PC-9 (cell line): ENCODE measurements at regions of chr1 and their contacts with region 1.

Region 1: DNA sequence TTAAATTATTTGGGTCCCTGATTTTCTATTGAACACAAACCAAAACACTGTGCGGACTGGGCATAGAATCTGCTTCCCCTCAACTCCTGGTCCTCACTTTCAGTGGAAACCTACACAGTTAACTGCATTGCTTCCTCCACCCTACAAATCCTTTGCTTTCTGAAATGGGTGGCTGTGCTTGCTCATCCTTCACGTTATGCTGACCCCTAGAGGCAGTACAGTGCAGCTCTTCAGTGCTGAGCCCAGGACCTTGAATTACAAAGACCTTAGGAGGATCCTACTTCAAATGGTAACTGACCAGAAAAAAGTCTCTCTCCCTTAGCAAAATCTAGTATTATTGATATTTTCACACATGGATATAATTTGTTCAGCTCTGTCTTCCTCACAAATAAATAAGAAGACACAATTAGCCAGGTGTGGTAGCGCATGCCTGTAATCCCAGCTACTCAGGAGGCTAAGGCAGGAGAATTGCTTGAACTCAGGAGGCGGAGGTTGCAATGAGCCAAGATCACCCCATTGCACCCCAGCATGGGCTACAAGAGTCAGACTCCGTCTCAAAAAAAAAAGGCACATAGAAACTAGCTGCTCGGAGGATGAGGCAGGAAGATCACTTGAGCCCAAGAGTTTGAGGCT is 63.4 kb upstream of the L1TD1 start:
- DNase-seq: peak in 1 of 2 experiments; percentile 41
- H3K4me3 ChIP-seq: no peak overlapping the region
- H3K27ac ChIP-seq: no peak overlapping the region
- H3K4me1 ChIP-seq: no peaks in the 10 kb centered on the region
- H3K27me3 ChIP-seq: no peaks in the 10 kb centered on the region
- CTCF ChIP-seq: peak; percentile 83

Region 2: GRCh38 chr1:61950418-61950817 is 180.8 kb before region 1 on chr1:
- CTCF ChIA-PET with region 1: no interaction called
- POLR2A ChIA-PET with region 1: no interaction called
- intact Hi-C with region 1: loop called (anchors 2 kb)
- DNase-seq: peak in 1 of 2 experiments; percentile 61
- H3K4me3 ChIP-seq: no peak overlapping the region
- H3K27ac ChIP-seq: no peak overlapping the region
- H3K4me1 ChIP-seq: no peaks in the 10 kb centered on the region
- H3K27me3 ChIP-seq: no peaks in the 10 kb centered on the region
- CTCF ChIP-seq: peak; percentile 55

Region 3: GRCh38 chr1:62082456-62083363 is 48.5 kb before region 1 on chr1:
- CTCF ChIA-PET with region 1: interaction called, 12 read pairs
- POLR2A ChIA-PET with region 1: no interaction called
- intact Hi-C with region 1: loop called (anchors 1 kb)
- DNase-seq: peak in 1 of 2 experiments; percentile 27
- H3K4me3 ChIP-seq: no peak overlapping the region
- H3K27ac ChIP-seq: no peak overlapping the region
- H3K4me1 ChIP-seq: no peaks in the 10 kb centered on the region
- H3K27me3 ChIP-seq: no peaks in the 10 kb centered on the region
- CTCF ChIP-seq: peak; percentile 91

Region 4: DNA sequence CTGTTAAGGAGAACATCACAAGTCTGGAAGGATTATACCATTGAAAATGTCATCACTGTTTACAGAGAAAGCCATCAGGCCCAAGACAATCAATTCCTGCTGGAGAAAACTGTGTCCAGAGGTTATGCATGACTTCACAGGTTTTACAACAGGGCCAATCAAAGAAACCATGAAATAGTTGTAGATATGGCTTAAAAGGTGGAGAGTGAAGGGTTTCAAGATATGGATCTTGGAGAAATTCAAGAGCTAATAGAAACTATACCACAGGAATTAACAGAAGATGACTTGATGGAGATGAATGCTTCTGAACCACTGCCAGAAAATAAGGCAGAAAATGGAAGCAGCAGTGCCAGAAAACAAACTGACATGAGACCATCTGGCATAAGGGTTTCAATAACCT is 335.9 kb after region 1 on chr1:
- CTCF ChIA-PET with region 1: interaction called, 13 read pairs
- POLR2A ChIA-PET with region 1: no interaction called
- intact Hi-C with region 1: no loop called
- DNase-seq: no peak
- H3K4me3 ChIP-seq: no peak overlapping the region
- H3K27ac ChIP-seq: no peak overlapping the region
- H3K4me1 ChIP-seq: no peaks in the 10 kb centered on the region
- H3K27me3 ChIP-seq: no peaks in the 10 kb centered on the region
- CTCF ChIP-seq: no peak

Region 5: DNA sequence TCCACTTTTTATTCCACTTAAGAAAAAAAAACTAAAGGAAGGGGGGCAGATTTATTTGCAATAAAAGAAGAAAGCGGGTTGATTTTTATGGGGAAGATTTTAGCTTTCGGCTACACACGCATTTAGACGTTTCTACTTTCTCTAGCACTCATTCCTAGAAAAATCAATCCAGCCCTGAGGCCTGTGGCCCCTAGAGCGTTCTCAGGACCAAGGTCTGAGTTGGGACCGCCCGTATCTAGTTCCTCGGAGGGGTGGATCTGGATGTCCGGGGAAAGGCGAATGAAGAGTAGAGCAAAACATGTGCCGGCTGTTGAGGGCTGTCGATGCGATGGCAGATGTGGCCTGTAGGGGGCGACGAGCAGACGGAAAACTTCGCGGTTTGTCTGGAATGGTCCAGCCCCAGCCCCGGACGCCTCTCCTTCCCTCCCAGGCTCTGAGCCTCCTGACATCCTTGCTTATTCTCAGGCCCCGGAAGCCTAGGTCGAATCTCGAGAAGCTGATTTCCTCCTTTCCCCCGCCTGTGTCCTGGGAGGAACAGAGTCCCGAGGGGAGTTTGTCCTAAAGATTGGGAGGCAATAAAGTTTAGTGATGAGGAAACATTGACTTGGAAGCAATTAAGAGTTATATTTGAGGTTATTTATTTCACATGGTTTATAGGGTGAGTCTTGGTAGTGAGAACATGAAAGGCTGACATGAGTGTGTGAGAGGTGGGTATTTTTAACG is 1196.4 kb after region 1 on chr1:
- CTCF ChIA-PET with region 1: no interaction called
- POLR2A ChIA-PET with region 1: no interaction called
- intact Hi-C with region 1: no loop called
- DNase-seq: peak in 1 of 2 experiments; percentile 70
- H3K4me3 ChIP-seq: no peak overlapping the region
- H3K27ac ChIP-seq: no peak overlapping the region
- H3K4me1 ChIP-seq: no peaks in the 10 kb centered on the region
- H3K27me3 ChIP-seq: peaks cover 13% of the 10 kb centered on the region; the same call in 1 of the 2 replicates
- CTCF ChIP-seq: peak; percentile 86